IMR-90 (cell line): ENCODE measurements at regions of chr10 and their contacts with region 1.

Region 1: DNA sequence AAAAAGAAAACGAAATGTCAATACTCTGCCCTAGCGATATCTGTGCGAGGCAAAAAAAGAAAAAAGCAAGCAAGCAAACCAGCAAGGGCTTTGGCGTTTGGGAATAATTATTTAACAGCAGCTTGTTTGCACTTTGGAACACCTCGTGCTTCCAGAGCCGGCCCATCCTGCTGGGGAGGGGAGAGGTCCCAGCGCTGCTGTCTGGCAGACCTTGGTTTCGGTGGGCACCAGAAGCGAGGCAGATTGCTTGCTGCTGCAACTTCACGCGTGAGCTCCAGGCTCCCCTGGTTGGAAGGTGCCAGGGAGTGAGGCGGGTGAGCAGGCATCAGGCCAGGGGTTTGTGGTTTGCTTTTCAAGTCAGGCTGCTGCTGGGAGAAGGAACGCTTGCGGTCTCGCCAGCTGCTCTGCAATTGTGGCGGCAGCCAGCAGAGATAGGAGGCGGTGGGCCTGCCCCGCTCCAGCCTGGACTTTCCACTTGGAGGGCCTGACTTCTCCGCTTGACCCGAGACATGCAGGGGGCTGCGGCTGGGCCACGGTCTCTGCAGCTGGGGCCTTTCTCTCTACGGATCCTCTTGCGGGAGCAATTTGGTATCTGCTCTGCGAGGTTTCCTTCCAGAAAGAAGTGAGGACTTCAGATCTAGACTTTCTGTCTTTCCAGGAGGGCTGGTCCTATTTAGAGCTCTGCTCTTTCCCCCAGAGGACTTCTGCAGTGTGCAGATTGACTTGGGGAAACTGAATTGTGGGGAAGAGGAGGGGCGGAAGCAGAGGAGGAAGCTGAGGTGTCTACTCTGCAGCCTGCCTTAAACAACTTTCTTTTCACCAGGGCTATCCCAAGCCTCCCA is 131.4 kb downstream of the PRPF18 start:
- DNase-seq: peak; percentile 95
- ATAC-seq: peak; percentile 77
- H3K4me3 ChIP-seq: peak overlapping the region; percentile 14; the same call in 1 of the 2 replicates
- H3K27ac ChIP-seq: peak overlapping the region; percentile 46
- H3K4me1 ChIP-seq: peaks cover 33% of the 10 kb centered on the region
- H3K27me3 ChIP-seq: no peaks in the 10 kb centered on the region
- CTCF ChIP-seq: no peak
- POLR2A ChIP-seq: no peak
- RAD21 ChIP-seq: no peak

Region 2: GRCh38 chr10:13751191-13751764 is 33.1 kb after region 1 on chr10:
- CTCF ChIA-PET with region 1: no interaction called
- POLR2A ChIA-PET with region 1: no interaction called
- dilution Hi-C with region 1: no loop called
- in situ Hi-C with region 1: no loop called
- intact Hi-C with region 1: loop called (anchors 5 kb)
- DNase-seq: no peak
- ATAC-seq: no peak
- H3K4me3 ChIP-seq: no peak overlapping the region
- H3K27ac ChIP-seq: no peak overlapping the region
- H3K4me1 ChIP-seq: no peaks in the 10 kb centered on the region; the same call in 1 of the 2 replicates
- H3K27me3 ChIP-seq: no peaks in the 10 kb centered on the region
- CTCF ChIP-seq: no peak
- POLR2A ChIP-seq: no peak
- RAD21 ChIP-seq: no peak

Region 3: GRCh38 chr10:14074057-14074884 is 356.1 kb after region 1 on chr10:
- CTCF ChIA-PET with region 1: no interaction called
- POLR2A ChIA-PET with region 1: no interaction called
- dilution Hi-C with region 1: no loop called
- in situ Hi-C with region 1: no loop called
- intact Hi-C with region 1: no loop called
- DNase-seq: peak; percentile 100
- ATAC-seq: peak; percentile 96
- H3K4me3 ChIP-seq: no peak overlapping the region
- H3K27ac ChIP-seq: peak overlapping the region; percentile 86
- H3K4me1 ChIP-seq: peaks cover 6% of the 10 kb centered on the region
- H3K27me3 ChIP-seq: no peaks in the 10 kb centered on the region
- CTCF ChIP-seq: no peak
- POLR2A ChIP-seq: no peak
- RAD21 ChIP-seq: no peak; the same call in 1 of the 2 replicates